HEK293T (cell line): ENCODE measurements at regions of chrX and their contacts with region 1.

Region 1: GRCh38 chrX:69222103-69223090 is 57.1 kb upstream of the PJA1 start:
- DNase-seq: peak; percentile 81

Region 2: DNA sequence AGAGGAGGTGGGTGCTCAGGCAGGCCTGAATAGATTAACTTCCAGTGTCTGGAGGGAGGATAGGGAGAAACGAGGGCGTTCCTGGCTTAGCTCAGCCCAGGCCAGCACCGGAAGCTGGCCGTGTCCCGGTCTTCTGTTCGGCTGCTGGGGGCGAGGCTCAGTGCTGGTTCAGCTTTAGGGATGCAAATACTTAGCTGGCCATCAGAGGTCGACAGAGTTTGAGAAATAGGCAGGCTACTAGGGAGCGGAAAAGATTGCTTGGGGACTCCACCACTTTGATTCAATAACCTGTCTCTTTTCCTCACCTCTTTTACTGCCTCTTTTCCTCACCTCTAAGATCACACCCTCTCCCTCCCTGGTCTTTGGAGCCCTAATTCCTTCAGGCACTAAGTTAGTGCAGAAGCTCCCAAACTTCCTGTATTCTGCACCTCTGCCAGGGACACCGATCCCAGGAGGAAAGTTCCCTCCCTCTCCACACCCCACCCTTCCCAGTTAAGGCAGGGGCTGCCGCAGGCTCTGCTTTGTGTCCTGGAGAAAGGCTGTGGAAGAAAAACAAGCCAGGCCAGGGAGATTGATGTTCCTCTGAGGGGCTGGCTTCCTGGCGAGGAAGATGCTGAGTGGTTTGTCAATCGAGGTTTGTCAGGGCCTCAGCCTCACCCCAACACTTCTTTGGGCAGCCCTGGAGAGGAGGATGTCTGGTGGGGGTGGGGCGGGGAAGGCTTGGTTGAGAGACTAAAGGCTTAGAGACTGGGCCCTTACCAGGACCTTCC is 399.6 kb before region 1 on chrX:
- CTCF ChIA-PET with region 1: interaction called, 54 read pairs
- POLR2A ChIA-PET with region 1: interaction called, 20 read pairs
- DNase-seq: peak; percentile 71

Region 3: GRCh38 chrX:69210581-69210980 is 11.8 kb before region 1 on chrX:
- CTCF ChIA-PET with region 1: interaction called, 11 read pairs
- POLR2A ChIA-PET with region 1: interaction called, 3 read pairs
- DNase-seq: no peak

Region 4: GRCh38 chrX:69323786-69324720 is 101.7 kb after region 1 on chrX:
- CTCF ChIA-PET with region 1: no interaction called
- POLR2A ChIA-PET with region 1: no interaction called
- DNase-seq: peak; percentile 19